Aorta (tissue), 5 donors: ENCODE measurements at regions of chr7 and their contacts with region 1.

Region 1: DNA sequence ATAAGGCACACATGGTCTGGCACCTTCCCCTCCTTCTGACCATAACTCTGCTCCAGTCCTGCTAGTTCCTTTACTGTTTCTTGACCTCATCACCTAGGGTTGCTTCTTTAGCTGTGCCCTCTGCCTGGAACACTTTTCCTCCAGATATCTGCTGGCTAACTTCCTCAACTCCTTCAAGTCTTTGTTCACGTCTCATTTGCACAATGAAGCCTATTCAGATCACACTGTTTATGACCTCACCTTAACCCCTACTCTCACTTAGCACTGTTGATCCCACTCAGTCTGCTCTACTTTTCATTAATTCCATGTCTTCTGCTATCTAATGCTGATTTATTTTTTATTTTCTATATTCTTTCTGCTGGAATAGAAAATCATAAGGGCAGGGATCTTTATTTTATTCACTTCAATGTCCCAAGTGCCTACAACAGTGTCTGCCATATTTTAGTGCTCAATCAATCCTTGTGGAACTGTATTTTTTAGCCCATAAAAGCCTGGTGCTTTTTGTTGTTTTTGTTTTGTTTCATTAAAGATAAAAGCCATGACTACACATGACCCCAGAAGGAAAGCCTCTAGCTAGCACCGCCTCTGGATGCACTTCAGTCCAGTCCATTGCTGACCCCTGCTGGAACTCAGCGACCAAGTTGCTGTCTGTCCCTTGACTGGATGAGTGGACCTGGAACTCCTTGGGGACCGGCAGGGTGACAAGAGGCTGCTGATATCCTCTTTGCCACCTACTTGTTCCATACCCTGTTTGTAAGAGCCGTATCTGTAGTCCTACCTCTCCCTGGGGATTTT is 12.3 kb downstream of the KLF14 start:
- DNase-seq: peak; percentile 76 to 85
- ATAC-seq: peak; percentile 82
- H3K4me3 ChIP-seq: no peak overlapping the region
- H3K27ac ChIP-seq: no peak overlapping the region
- H3K4me1 ChIP-seq: no peaks in the 10 kb centered on the region
- H3K27me3 ChIP-seq: no peaks in the 10 kb centered on the region

Region 2: DNA sequence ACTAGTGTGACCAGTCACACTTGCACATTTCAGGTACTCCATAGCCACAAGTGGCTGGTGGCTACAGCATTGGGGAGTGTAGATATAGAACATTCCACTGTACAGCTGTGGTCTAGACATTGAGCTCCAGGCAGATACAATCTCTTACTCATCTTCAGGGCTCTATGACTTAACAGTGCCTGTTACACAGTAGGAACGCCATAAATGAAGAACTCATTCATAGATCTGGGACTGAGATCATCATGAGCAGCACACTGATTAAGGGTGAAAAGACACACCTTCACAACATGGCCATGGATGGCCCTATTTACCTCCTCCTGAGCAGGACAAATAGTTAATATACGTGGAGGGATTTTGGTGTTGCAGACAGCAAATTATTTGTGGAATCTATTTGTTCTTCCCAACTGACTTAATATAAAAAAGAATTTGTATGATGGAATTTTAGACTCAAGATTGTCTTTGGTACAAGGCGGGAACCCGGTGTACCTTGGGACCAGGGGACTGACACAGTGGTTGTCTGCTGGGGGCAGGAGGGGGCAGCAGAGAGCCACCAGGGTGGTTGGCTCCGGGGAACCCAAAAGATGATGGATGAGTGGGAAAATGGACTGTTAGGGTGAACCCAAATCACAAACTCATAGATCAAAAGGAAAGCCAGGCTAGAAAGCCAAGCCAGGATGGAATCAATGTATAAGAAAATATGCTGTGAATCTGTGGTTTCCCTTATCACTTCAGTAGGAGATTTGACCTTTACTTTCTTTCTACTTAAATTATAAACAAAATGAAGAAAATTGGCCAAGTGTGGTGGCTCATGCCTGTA is 479.3 kb before region 1 on chr7:
- intact Hi-C with region 1: loop called (anchors 1 to 5 kb)
- DNase-seq: peak; percentile 66 to 87
- ATAC-seq: peak; percentile 79
- H3K4me3 ChIP-seq: no peak overlapping the region
- H3K27ac ChIP-seq: no peak overlapping the region
- H3K4me1 ChIP-seq: no peaks in the 10 kb centered on the region
- H3K27me3 ChIP-seq: no peaks in the 10 kb centered on the region

Region 3: DNA sequence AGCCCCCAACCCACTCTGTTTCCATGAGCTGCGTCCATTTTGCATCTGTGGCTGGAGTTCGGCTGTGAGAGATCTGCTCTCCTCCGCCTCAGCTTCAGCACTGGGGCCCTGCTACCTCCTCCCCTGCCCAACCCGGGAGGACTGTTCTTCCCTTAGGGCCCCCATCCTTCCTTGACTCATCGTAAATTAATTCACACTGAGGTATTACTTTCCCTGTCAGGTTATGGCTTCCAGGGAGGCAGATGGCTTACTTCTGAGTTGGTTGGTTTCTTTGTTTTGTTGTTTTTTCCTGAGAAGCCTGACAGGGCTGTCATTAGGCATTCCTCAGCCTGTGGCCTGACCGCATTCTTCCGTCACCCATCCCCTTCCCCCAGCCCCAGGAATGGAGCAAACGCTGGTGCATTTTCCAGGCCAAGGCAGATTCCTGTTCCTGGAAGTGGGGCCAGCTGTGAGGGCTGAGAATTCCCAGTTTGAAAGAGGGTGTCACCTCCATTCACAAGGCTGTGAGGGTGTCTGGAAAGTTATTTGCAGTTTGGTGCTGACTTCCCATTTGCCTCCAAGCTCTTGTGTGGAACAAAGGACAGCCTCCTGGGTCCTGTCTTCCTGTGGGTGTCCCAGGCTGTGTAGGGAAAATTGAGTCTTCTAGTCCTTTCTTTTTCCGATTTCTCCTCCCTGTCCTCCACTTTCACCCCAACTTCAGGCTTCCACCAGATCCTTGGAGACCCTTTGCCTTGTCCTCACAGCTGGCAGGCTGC is 365.4 kb before region 1 on chr7:
- intact Hi-C with region 1: no loop called
- DNase-seq: peak in 1 of 2 donors; percentile 66
- ATAC-seq: peak; percentile 8
- H3K4me3 ChIP-seq: no peak overlapping the region
- H3K27ac ChIP-seq: peak overlapping the region in 1 of 2 donors; percentile 53
- H3K4me1 ChIP-seq: no peaks in the 10 kb centered on the region
- H3K27me3 ChIP-seq: no peaks in the 10 kb centered on the region